ENCODE measurements at regions of chr12 and their contacts with region 1.

Region 1: GRCh38 chr12:58346032-58346632 is 404.8 kb downstream of the ATP23 start:
- DNase-seq: peak in 1 of 2 experiments; percentile 23
- H3K4me3 ChIP-seq: no peak overlapping the region
- H3K4me3 Mint-ChIP-seq: no peak overlapping the region
- H3K27ac Mint-ChIP-seq: no peak overlapping the region
- H3K4me1 ChIP-seq: peaks cover 17% of the 10 kb centered on the region
- H3K4me1 Mint-ChIP-seq: no peaks in the 10 kb centered on the region
- H3K27me3 ChIP-seq: no peaks in the 10 kb centered on the region
- H3K27me3 Mint-ChIP-seq: no peaks in the 10 kb centered on the region
- CTCF ChIP-seq: peak; percentile 72 to 79

Region 2: GRCh38 chr12:58310828-58311622 is 35.1 kb before region 1 on chr12:
- CTCF ChIA-PET with region 1: no interaction called
- POLR2A ChIA-PET with region 1: no interaction called
- intact Hi-C with region 1: no loop called
- DNase-seq: peak in 1 of 2 experiments; percentile 5
- H3K4me3 ChIP-seq: no peak overlapping the region
- H3K4me3 Mint-ChIP-seq: no peak overlapping the region
- H3K27ac Mint-ChIP-seq: no peak overlapping the region
- H3K4me1 ChIP-seq: peaks cover 9% of the 10 kb centered on the region; the same call in 1 of the 2 replicates
- H3K4me1 Mint-ChIP-seq: peaks cover 9% of the 10 kb centered on the region
- H3K27me3 ChIP-seq: no peaks in the 10 kb centered on the region
- H3K27me3 Mint-ChIP-seq: no peaks in the 10 kb centered on the region
- CTCF ChIP-seq: no peak

Region 3: GRCh38 chr12:58416236-58416635 is 70.1 kb after region 1 on chr12:
- CTCF ChIA-PET with region 1: no interaction called
- POLR2A ChIA-PET with region 1: no interaction called
- intact Hi-C with region 1: loop called (anchors 1 kb)
- DNase-seq: no peak
- H3K4me3 ChIP-seq: no peak overlapping the region
- H3K4me3 Mint-ChIP-seq: no peak overlapping the region
- H3K27ac Mint-ChIP-seq: peak overlapping the region; percentile 64
- H3K4me1 ChIP-seq: peaks cover 49% of the 10 kb centered on the region
- H3K4me1 Mint-ChIP-seq: peaks cover 54% of the 10 kb centered on the region
- H3K27me3 ChIP-seq: no peaks in the 10 kb centered on the region
- H3K27me3 Mint-ChIP-seq: no peaks in the 10 kb centered on the region
- CTCF ChIP-seq: peak in 1 of 2 experiments; percentile 2

Region 4: DNA sequence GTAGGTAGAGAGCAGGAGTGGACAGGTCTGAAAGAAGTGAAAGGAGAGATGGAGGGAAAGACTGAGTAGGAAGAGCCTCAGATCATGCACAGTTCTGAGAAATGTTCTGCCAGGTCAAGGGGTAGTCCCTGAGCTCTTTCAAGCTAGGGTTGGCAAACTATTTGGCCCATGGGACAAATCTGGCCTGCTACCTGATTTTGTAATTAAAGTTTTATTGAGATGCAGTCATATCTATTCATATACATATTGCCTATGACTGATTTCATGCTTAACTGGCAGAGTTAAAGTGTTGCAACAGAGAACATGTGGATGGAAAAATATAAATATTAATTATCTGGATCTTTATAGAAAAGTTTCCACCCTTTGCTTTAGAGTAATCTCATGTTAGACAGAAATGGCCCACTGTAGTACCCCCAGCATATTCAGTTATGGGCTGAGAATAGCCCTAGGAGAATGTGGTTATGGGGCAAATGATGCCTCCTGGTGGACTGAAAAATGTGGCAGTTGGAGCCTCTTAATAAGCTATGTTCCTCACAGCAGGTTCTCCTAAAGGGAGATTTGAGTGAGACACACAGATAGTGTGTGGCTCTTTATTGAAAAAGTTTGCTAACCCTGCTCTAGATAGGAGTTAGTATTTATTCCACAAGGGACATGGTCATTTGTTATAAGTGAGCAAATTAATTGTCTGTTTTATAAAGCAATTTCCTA is 97.3 kb after region 1 on chr12:
- CTCF ChIA-PET with region 1: no interaction called
- POLR2A ChIA-PET with region 1: no interaction called
- intact Hi-C with region 1: loop called (anchors 1 kb)
- DNase-seq: no peak
- H3K4me3 ChIP-seq: no peak overlapping the region
- H3K4me3 Mint-ChIP-seq: no peak overlapping the region
- H3K27ac Mint-ChIP-seq: peak overlapping the region; percentile 30
- H3K4me1 ChIP-seq: 0 out of 2 replicates have a peak, but pooled peaks cover 3% of the 10 kb centered on the region
- H3K4me1 Mint-ChIP-seq: peaks cover 13% of the 10 kb centered on the region
- H3K27me3 ChIP-seq: no peaks in the 10 kb centered on the region
- H3K27me3 Mint-ChIP-seq: no peaks in the 10 kb centered on the region
- CTCF ChIP-seq: peak; percentile 12 to 34

Region 5: GRCh38 chr12:58920102-58920960 is 574.2 kb after region 1 on chr12 and contains the start of gene LRIG3:
- CTCF ChIA-PET with region 1: no interaction called
- POLR2A ChIA-PET with region 1: no interaction called
- intact Hi-C with region 1: loop called (anchors 5 kb)
- DNase-seq: peak; percentile 81 to 88
- H3K4me3 ChIP-seq: peak within 1 kb of the TSS; percentile 59
- H3K4me3 Mint-ChIP-seq: peak within 1 kb of the TSS; percentile 91
- H3K27ac Mint-ChIP-seq: peak within 1 kb of the TSS; percentile 82
- H3K4me1 ChIP-seq: peaks cover 36% of the 10 kb centered on the region
- H3K4me1 Mint-ChIP-seq: peaks cover 38% of the 10 kb centered on the region
- H3K27me3 ChIP-seq: no peaks in the 10 kb centered on the region
- H3K27me3 Mint-ChIP-seq: no peaks in the 10 kb centered on the region
- CTCF ChIP-seq: peak in 1 of 2 experiments; percentile 24
- total RNA-seq, gene LRIG3: 19.1 and 19.8 TPM in 2 replicates

Region 6: GRCh38 chr12:59113831-59114615 is 767.9 kb after region 1 on chr12:
- CTCF ChIA-PET with region 1: no interaction called
- POLR2A ChIA-PET with region 1: no interaction called
- intact Hi-C with region 1: loop called (anchors 1 kb)
- DNase-seq: peak; percentile 74 to 80
- H3K4me3 ChIP-seq: no peak overlapping the region
- H3K4me3 Mint-ChIP-seq: no peak overlapping the region
- H3K27ac Mint-ChIP-seq: no peak overlapping the region
- H3K4me1 ChIP-seq: no peaks in the 10 kb centered on the region
- H3K4me1 Mint-ChIP-seq: no peaks in the 10 kb centered on the region
- H3K27me3 ChIP-seq: no peaks in the 10 kb centered on the region
- H3K27me3 Mint-ChIP-seq: no peaks in the 10 kb centered on the region
- CTCF ChIP-seq: peak; percentile 88 to 89